ENCODE measurements at regions of chr3 and their contacts with region 1.

Region 1: DNA sequence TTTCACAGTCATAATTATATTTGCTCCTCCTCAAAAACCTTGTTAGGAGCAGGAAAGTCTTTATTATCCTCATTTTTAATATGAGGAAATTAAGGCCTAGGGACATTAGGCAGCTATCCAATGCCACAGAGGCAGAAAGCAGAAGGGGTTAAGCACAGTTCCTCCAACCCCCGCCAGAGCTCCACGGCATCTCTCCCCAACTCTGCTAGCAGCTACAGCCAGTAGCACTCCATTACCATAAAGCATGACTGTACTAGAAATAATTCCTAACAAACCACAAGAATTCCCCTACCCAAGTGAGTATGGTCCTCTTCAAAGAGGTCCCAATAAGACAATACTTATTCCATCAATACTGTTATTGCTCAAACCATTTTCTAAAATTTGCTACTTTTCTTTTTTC is 9.8 kb downstream of the HEG1 start:
- ATAC-seq: peak in 3 of 8 experiments; percentile 12 to 94 (median 49)
- H3K4me3 ChIP-seq: no peak overlapping the region
- H3K27ac ChIP-seq: no peak overlapping the region
- H3K4me1 ChIP-seq: peaks cover 26 to 33% of the 10 kb centered on the region in 2 donors

Region 2: GRCh38 chr3:125165189-125165947 is 119.4 kb after region 1 on chr3:
- in situ Hi-C with region 1: loop called in 1 of 9 experiments (anchors 10 kb)
- ATAC-seq: peak in 6 of 8 experiments; percentile 15 to 81 (median 56)
- H3K4me3 ChIP-seq: no peak overlapping the region
- H3K27ac ChIP-seq: no peak overlapping the region
- H3K4me1 ChIP-seq: peaks cover 20 to 23% of the 10 kb centered on the region in 2 donors

Region 3: GRCh38 chr3:125192190-125193035 is 146.4 kb after region 1 on chr3:
- in situ Hi-C with region 1: no loop called
- ATAC-seq: peak in 7 of 8 experiments; percentile 17 to 53 (median 46)
- H3K4me3 ChIP-seq: no peak overlapping the region
- H3K27ac ChIP-seq: no peak overlapping the region
- H3K4me1 ChIP-seq: no peaks in the 10 kb centered on the region

Region 4: DNA sequence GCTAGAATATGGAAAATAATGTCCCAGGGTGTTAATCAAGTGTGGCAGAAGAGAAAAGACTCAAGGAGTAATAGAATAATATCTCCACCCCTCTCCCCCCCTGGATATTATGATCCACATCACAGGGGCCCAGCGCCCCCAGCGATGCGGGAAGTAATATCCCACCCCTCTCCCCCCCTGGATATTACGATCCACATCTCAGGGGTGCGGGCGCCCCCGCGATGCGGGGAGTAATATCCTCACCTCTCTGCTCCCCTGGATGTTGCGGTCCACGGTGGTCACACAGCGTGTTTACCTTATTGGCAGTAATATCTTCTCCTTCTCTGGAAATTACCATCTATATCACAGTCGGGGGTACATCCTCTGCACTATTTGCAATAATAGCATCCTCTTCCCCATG is 646.4 kb after region 1 on chr3:
- in situ Hi-C with region 1: no loop called
- ATAC-seq: no peak
- H3K4me3 ChIP-seq: no peak overlapping the region
- H3K27ac ChIP-seq: no peak overlapping the region
- H3K4me1 ChIP-seq: peaks cover 0 to 14% of the 10 kb centered on the region in 2 donors